Dendritic cell treated with granulocyte-macrophage colony-stimulating factor and Interleukin-4, amounts not matched to agents 40 ng/mL and 50 ng/mL, for 4 days (primary cell): ENCODE measurements at regions of chr7 and their contacts with region 1.

Region 1: DNA sequence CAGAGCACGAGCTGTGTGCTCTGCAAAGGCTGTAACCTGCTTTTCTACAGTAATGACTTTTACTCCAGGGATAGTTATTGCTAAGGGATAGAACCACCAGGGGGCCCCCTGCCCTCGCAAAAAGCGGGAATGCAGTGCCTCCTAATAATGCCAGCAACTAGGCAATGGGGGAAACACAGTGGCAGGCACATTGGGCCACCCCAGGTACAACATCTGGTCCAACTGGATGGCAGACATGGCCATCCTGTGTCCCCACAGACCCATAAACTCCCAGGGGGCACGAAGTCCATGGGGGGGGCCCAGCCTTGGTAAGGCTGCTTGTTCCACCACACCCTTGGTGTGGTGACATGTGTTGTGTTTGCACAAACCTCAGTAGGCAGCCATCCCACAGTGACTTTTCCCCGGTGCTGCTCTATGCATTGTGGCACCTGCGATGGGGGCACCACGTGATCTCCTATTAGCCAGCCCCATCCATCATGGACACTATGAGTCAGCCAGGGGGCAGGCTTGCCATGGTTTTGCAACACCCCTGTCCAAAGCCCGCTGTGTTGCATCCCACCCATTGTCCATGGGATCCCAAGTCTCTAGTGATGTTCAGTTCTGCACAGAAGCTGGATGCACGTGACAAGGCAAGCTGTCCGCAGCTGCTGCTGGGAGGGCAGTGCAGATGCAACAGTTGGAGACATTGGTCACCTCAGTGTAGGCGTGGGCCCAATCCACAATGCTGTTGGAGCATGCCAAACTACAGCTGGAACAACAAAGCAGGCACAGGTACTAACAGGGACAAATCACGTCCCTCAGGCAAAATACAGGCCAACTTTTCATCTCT is 84.0 kb downstream of the ANLN start:
- H3K4me3 Mint-ChIP-seq: no peak overlapping the region
- H3K27ac Mint-ChIP-seq: no peak overlapping the region
- H3K4me1 Mint-ChIP-seq: peaks cover 10% of the 10 kb centered on the region
- H3K27me3 Mint-ChIP-seq: no peaks in the 10 kb centered on the region

Region 2: GRCh38 chr7:37201003-37201875 is 727.6 kb after region 1 on chr7:
- intact Hi-C with region 1: loop called (anchors 5 kb)
- H3K4me3 Mint-ChIP-seq: no peak overlapping the region
- H3K27ac Mint-ChIP-seq: no peak overlapping the region
- H3K4me1 Mint-ChIP-seq: no peaks in the 10 kb centered on the region
- H3K27me3 Mint-ChIP-seq: no peaks in the 10 kb centered on the region